ENCODE measurements at regions of chr11 and their contacts with region 1.

Region 1: GRCh38 chr11:6353367-6353987 is 33.2 kb upstream of the CAVIN3 start:
- DNase-seq: peak; percentile 70
- ATAC-seq: peak; percentile 78
- H3K4me3 Mint-ChIP-seq: no peak overlapping the region
- H3K27ac Mint-ChIP-seq: no peak overlapping the region
- H3K4me1 Mint-ChIP-seq: peaks cover 10% of the 10 kb centered on the region
- H3K27me3 Mint-ChIP-seq: no peaks in the 10 kb centered on the region

Region 2: DNA sequence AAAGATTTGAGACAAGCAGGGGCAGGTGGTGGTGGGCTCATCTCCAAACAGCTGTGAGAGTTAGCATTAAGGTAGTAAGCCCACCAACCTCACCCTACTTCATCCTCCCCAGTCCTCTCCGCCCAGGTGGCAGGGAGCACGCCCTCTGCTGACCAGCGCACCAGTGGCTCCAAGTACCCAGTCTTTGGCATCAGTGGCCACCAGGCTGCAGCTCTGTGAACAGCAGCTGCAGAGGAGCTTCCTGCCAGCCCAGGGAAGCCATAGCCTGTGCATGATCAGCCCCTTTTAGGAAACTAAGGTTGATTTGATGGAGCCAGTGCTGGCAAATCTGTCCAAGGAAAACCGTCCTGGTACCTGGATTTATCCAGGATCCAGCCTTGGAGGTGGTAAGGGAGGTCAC is 54.9 kb before region 1 on chr11:
- CTCF ChIA-PET with region 1: interaction called, 29 read pairs
- DNase-seq: peak; percentile 47
- ATAC-seq: peak; percentile 55
- H3K4me3 Mint-ChIP-seq: no peak overlapping the region
- H3K27ac Mint-ChIP-seq: no peak overlapping the region
- H3K4me1 Mint-ChIP-seq: no peaks in the 10 kb centered on the region
- H3K27me3 Mint-ChIP-seq: peaks cover 21% of the 10 kb centered on the region

Region 3: GRCh38 chr11:6315811-6316425 is 37.6 kb before region 1 on chr11:
- CTCF ChIA-PET with region 1: interaction called, 25 read pairs
- DNase-seq: peak; percentile 55
- ATAC-seq: peak; percentile 55
- H3K4me3 Mint-ChIP-seq: no peak overlapping the region
- H3K27ac Mint-ChIP-seq: no peak overlapping the region
- H3K4me1 Mint-ChIP-seq: peaks cover 14% of the 10 kb centered on the region
- H3K27me3 Mint-ChIP-seq: peaks cover 61% of the 10 kb centered on the region